Activated T-helper 1 cell treated with anti-CD3 and anti-CD28 coated beads, Interleukin-12 subunit alpha, Interleukin-12 subunit beta, Interleukin-2, Interleukin-4 antibody, amounts not matched to agents 30 ng/mL and 10 ng/mL and 1 ng/mL, durations not matched to agents 14 hours and 24 hours and 36 hours (primary cell): ENCODE measurements at regions of chr6 and their contacts with region 1.

Region 1: GRCh38 chr6:24874776-24875534 is 60.8 kb downstream of the RIPOR2 start:
- DNase-seq: no peak
- H3K4me3 Mint-ChIP-seq: no peak overlapping the region
- H3K27ac Mint-ChIP-seq: peak overlapping the region; percentile 18
- H3K4me1 Mint-ChIP-seq: peaks cover 32% of the 10 kb centered on the region
- H3K27me3 Mint-ChIP-seq: no peaks in the 10 kb centered on the region

Region 2: DNA sequence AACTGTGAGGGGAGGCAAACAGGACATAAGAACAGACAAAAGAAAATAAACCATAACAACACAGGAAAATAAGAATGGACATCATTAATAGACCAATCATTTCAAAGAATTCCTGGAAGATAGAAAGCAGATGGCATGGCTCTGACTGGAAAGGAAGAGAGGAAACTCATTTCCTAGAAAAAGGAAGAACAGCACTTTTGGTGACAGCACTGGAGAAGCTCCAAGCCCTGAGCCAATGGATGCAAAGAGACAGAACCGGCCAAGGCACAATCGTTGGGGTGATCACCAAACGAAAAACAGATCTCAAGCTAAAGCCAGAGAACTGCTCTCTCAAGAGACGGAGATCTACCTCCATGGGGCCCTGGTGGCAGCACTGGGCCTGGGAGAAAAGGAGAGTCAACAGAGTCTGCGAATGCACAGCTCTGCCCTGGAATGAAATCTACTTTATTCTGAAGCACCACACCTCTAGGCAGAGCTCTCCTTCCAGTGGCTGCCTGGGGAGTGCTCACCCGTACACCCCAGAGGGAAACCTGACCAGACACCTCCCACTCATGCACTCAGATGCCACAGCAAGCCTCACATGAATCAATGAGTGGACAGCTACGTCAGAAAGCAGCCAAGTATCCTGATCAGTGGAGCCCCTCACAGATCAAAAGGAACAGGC is 253.2 kb before region 1 on chr6:
- intact Hi-C with region 1: no loop called
- DNase-seq: no peak
- H3K4me3 Mint-ChIP-seq: no peak overlapping the region
- H3K27ac Mint-ChIP-seq: no peak overlapping the region
- H3K4me1 Mint-ChIP-seq: no peaks in the 10 kb centered on the region
- H3K27me3 Mint-ChIP-seq: no peaks in the 10 kb centered on the region

Region 3: DNA sequence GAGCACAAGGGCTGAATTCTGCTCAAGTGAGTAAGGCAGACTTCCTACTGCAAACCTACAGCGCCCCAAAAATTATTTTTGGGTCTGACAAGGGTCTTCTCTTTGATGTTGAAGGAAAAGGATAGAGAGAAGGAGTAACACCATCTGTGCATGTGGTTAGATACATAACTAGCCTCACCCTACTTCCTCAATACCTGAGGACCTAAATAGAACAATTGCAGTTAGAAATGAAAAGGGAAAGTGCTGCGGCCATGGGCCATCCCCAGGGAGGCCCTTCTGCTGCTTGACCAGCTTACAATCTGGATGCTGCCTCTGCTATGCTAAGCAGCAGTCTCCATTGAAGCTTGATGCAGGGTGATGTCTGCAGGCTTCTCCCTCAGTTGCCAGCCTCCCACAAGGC is 13.0 kb before region 1 on chr6:
- intact Hi-C with region 1: loop called (anchors 2 kb)
- DNase-seq: no peak
- H3K4me3 Mint-ChIP-seq: no peak overlapping the region
- H3K27ac Mint-ChIP-seq: peak overlapping the region; percentile 18
- H3K4me1 Mint-ChIP-seq: peaks cover 85% of the 10 kb centered on the region
- H3K27me3 Mint-ChIP-seq: no peaks in the 10 kb centered on the region

Region 4: DNA sequence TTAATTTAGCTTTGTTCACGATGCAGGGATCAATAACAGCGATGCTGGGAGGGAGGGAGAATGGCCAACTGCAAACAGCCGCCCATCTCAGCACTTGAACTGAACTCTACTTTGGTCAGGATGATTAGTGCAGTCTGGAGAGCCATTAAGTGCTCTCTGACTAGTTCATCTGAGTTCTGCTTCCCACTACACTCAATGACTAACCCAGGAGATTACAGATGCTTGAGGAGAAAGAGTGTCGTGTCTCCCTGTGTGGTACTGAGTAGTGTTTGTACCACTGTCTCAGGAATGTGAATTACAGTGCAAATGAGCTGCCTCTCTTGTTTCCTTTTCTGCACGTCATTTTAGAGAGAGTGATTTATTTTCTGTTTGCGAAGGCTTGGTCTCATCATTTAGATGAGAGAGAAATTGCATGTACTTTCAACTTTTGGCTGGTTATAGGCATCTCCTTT is 427.7 kb after region 1 on chr6:
- intact Hi-C with region 1: no loop called
- DNase-seq: no peak
- H3K4me3 Mint-ChIP-seq: no peak overlapping the region
- H3K27ac Mint-ChIP-seq: no peak overlapping the region
- H3K4me1 Mint-ChIP-seq: no peaks in the 10 kb centered on the region
- H3K27me3 Mint-ChIP-seq: peaks cover 3% of the 10 kb centered on the region

Region 5: DNA sequence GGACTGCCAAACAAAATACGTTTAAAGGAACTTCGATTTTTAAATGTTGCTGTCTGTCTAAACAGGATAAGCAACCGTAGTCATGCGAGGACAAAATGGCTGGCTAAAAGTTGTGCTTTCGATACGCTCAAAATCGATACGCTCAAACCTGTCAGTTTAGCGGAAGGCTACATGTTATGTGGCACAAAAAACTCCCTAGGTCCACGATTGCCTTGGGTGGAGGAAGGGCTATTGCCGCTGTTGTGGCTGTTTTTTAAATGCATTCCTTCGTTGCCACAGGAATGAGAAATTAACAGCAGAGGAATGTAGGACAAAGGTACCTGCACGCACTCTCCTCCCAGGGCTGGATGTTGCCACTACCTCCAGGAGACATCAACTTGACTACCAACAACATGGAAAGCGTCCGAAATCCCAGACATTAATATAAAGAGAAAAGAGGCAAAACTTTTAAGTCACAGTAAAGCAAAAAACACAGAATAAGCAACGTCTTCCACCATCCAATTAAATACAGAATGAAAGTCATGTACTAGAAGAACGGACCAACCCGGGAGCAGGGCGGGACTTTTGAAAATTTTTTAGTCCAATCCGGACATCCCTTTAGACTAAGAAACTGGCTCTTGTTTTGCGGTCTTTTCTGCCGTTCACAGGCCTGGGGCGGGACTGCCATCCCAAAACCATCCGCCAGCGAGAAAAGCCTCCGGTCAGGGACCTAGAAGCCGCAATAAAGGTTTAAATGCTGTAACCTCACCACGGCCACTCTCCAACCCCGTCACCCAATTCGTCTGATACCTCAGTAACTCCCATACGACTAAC is 1180.1 kb after region 1 on chr6:
- intact Hi-C with region 1: no loop called
- DNase-seq: peak; percentile 83
- H3K4me3 Mint-ChIP-seq: peak overlapping the region; percentile 91
- H3K27ac Mint-ChIP-seq: peak overlapping the region; percentile 99
- H3K4me1 Mint-ChIP-seq: peaks cover 42% of the 10 kb centered on the region
- H3K27me3 Mint-ChIP-seq: peaks cover 3% of the 10 kb centered on the region